Endothelial cell of umbilical vein (primary cell): ENCODE measurements at regions of chr3 and their contacts with region 1.

Region 1: GRCh38 chr3:33372218-33373081 is 67.8 kb downstream of the UBP1 start:
- DNase-seq: peak; percentile 71
- H3K4me3 ChIP-seq: no peak overlapping the region
- H3K27ac ChIP-seq: no peak overlapping the region
- H3K4me1 ChIP-seq: peaks cover 6% of the 10 kb centered on the region
- H3K27me3 ChIP-seq: no peaks in the 10 kb centered on the region
- CTCF ChIP-seq: peak; percentile 81 to 82
- POLR2A ChIP-seq: no peak

Region 2: DNA sequence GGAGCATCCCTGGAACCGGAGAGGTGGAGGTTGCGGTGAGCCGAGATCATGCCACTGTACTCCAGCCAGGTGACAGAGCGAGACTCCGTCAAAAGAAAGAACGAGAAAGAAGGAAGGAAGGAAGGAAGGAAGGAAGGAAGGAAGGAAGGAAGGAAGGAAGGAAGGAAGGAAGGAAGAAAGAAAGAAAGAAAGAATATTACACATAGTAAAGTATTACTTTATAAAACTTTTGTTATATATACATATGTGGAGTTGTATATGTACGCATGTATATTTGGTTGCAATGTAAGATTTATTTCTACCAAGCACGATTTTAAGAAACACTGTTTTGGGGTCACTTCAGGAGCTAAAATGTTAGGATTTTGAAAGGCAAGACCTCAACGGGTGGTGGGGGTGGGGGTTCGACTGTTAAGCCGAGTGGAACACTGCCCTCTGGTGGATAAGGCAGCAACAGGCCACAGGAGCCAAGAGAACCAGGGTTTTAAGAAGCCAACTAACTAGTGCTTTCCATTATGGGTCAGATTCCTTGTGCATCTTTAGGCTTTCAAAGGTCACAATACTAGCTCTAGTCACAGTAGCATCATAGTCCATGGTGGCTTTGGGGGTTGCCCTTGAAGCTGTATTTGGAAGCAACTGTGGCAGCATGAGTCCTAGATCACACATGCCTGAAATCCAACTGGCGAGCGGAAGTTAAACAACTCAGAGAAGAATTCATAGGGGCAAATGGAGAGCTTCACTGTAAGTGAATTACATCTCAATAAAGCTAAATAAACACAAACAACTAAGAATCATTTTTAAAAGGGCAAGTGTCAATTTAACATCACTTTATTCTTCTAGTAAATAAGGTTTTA is 298.0 kb before region 1 on chr3:
- CTCF ChIA-PET with region 1: interaction called, 16 read pairs
- POLR2A ChIA-PET with region 1: no interaction called
- dilution Hi-C with region 1: no loop called
- intact Hi-C with region 1: no loop called
- DNase-seq: peak; percentile 72
- H3K4me3 ChIP-seq: no peak overlapping the region
- H3K27ac ChIP-seq: no peak overlapping the region
- H3K4me1 ChIP-seq: no peaks in the 10 kb centered on the region
- H3K27me3 ChIP-seq: no peaks in the 10 kb centered on the region
- CTCF ChIP-seq: peak; percentile 93
- POLR2A ChIP-seq: no peak

Region 3: DNA sequence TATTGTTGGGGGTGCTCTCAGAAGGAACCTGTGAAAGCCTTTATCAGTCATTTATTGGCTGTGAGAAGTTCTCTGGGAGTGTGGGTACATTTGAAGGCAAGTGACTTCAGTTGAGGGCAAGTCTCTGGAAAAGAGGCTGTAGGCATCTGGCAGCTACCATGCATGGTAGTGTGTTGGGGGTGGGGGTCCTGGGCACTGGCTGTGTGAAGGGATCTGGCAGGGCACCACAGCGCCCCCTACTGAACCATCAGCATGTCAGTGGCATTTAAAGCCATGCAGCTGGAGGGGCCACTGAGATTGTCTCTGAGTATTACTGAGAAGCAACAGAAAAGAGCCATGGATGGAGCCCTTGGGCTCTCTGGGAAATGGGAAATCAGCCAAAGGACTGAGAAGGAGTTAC is 228.0 kb before region 1 on chr3:
- CTCF ChIA-PET with region 1: interaction called, 18 read pairs
- POLR2A ChIA-PET with region 1: no interaction called
- dilution Hi-C with region 1: no loop called
- intact Hi-C with region 1: no loop called
- DNase-seq: no peak
- H3K4me3 ChIP-seq: no peak overlapping the region
- H3K27ac ChIP-seq: no peak overlapping the region
- H3K4me1 ChIP-seq: peaks cover 3% of the 10 kb centered on the region
- H3K27me3 ChIP-seq: no peaks in the 10 kb centered on the region
- CTCF ChIP-seq: peak; percentile 26 to 40
- POLR2A ChIP-seq: no peak

Region 4: DNA sequence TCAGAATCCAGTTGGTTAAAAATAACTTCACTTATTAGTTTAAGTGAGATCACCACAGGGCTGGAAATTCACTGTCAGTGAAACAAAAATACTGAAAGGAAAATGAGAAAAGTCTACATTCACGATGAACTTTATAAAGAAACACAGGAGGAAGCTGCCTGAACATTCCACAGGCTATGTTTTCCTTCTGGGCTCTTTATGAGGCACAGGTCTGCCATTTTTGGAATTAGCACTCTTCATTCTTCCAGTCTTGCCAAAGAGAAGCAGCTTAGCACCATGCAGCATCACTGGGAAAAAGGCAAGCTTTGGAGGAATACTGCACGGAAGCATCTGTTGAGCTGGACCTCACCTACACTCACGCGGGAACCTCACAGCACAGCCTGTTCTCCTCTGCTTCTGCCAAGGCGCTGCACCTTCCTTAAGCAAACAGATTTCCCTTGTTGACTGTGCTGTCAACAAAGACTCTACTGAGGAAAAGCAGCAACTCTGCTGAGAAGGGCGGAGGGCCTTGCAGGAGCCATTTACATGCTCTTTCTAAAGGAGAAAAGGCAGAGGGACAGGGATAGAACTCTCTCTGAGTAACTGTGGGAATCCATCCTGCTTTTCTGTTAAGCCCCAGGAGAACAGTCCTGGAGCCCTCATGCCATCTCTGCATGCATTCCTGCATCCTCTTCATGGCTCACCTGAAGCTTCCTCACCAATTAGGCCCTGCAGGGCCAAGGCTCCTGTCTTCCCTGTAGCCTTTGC is 169.6 kb before region 1 on chr3:
- CTCF ChIA-PET with region 1: interaction called, 15 read pairs
- POLR2A ChIA-PET with region 1: no interaction called
- dilution Hi-C with region 1: no loop called
- intact Hi-C with region 1: no loop called
- DNase-seq: peak; percentile 8
- H3K4me3 ChIP-seq: no peak overlapping the region
- H3K27ac ChIP-seq: no peak overlapping the region
- H3K4me1 ChIP-seq: no peaks in the 10 kb centered on the region
- H3K27me3 ChIP-seq: no peaks in the 10 kb centered on the region
- CTCF ChIP-seq: no peak
- POLR2A ChIP-seq: no peak

Region 5: DNA sequence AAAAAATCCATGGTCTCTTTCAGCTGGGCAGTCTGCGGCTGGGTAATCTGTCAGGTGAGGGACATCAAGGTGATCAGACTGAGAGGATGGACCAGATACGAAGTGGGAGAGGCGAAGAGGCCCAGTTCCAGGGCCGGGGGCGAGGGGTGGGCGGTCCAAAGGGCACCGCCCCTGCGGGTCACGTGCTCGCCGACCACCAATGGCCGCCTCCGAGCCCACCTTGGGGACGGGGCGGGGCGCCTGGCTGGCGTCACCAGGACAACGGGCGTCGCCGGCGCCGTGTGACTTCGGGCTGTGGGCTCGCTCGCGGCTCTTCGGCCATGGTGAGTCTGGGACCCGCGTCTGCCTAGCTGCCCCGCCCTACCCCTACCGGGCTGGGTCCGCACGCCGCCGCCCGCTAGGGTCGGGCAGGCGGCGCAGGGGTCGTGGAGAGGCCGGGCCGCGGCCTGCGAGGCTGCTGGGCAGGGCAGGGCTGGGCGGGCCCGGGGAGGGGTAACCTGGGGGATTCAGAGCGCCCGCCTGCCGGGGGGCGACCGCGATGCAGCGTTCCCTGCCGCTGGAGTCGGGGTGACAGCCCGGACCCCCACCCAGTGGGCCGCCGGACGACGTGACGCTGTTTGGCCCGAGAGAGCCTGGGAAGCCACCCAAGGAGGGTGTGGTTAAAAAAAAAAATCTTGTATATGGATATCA is 95.1 kb before region 1 on chr3 and contains the start of gene FBXL2:
- CTCF ChIA-PET with region 1: interaction called, 32 read pairs
- POLR2A ChIA-PET with region 1: no interaction called
- dilution Hi-C with region 1: no loop called
- intact Hi-C with region 1: loop called (anchors 5 kb)
- DNase-seq: peak; percentile 73
- H3K4me3 ChIP-seq: peak within 1 kb of the TSS; percentile 66 to 93 (median 81)
- H3K27ac ChIP-seq: peak within 1 kb of the TSS; percentile 44
- H3K4me1 ChIP-seq: peaks cover 11% of the 10 kb centered on the region
- H3K27me3 ChIP-seq: no peaks in the 10 kb centered on the region
- CTCF ChIP-seq: no peak
- POLR2A ChIP-seq: peak; percentile 68
- total RNA-seq, gene FBXL2: 21.7 and 26.9 TPM in 2 replicates

Region 6: GRCh38 chr3:33318709-33319380 is 53.6 kb before region 1 on chr3:
- CTCF ChIA-PET with region 1: interaction called, 29 read pairs
- POLR2A ChIA-PET with region 1: no interaction called
- dilution Hi-C with region 1: no loop called
- intact Hi-C with region 1: no loop called
- DNase-seq: peak; percentile 60
- H3K4me3 ChIP-seq: no peak overlapping the region
- H3K27ac ChIP-seq: peak overlapping the region; percentile 85
- H3K4me1 ChIP-seq: peaks cover 58% of the 10 kb centered on the region
- H3K27me3 ChIP-seq: no peaks in the 10 kb centered on the region
- CTCF ChIP-seq: peak; percentile 12 to 15
- POLR2A ChIP-seq: no peak

Region 7: GRCh38 chr3:33385423-33385822 is 13.0 kb after region 1 on chr3:
- CTCF ChIA-PET with region 1: interaction called, 15 read pairs
- POLR2A ChIA-PET with region 1: no interaction called
- dilution Hi-C with region 1: no loop called
- intact Hi-C with region 1: no loop called
- DNase-seq: no peak
- H3K4me3 ChIP-seq: no peak overlapping the region
- H3K27ac ChIP-seq: no peak overlapping the region
- H3K4me1 ChIP-seq: peaks cover 21% of the 10 kb centered on the region
- H3K27me3 ChIP-seq: no peaks in the 10 kb centered on the region
- CTCF ChIP-seq: no peak
- POLR2A ChIP-seq: no peak